ENCODE measurements at regions of chr16 and their contacts with region 1.

Region 1: DNA sequence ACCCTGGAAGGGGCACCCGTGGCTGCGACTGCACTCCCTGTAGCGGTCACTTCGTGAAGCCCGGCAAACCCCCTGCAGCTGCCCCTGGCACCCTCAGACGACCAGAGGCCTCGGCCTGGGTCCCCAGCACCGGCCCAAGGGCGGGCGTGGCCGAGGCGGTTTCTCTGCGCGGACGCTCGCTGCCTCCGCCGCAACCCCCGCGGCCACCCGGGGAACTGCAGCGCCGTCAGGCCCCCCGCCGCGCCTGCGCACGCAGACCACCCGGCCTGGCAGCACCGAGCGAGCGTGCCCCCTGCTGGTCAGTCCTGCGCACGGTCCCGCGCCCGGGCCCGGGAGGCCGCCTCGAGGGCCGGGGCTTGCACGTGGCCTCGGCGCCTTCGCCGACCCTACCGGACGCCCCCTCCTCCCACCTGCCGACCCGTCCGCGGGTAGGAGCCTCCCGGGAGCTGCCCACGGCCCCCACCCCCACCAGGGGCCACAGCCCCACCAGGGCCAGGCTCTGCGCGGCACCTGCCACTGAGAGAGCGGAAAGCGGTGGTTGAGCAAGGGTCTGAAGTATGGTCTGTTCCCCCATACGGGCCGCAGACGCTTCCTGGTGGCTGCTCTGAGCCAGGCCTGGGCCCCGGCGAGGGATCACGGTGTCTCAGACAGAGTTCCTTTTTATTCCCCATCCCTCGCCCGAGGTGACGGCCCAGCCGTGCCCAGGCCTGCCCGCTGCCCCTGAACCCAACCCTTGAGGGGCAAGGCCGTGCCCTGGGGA is 11.5 kb upstream of the HS3ST6 start:
- DNase-seq: peak; percentile 70
- H3K4me3 Mint-ChIP-seq: peak overlapping the region; percentile 31
- H3K27ac Mint-ChIP-seq: no peak overlapping the region
- H3K4me1 Mint-ChIP-seq: no peaks in the 10 kb centered on the region
- H3K27me3 Mint-ChIP-seq: no peaks in the 10 kb centered on the region
- CTCF ChIP-seq: peak; percentile 98

Region 2: GRCh38 chr16:1863681-1864460 is 65.9 kb before region 1 on chr16:
- CTCF ChIA-PET with region 1: interaction called, 105 read pairs
- POLR2A ChIA-PET with region 1: interaction called, 4 read pairs
- intact Hi-C with region 1: loop called (anchors 2 kb)
- DNase-seq: peak; percentile 42
- H3K4me3 Mint-ChIP-seq: no peak overlapping the region
- H3K27ac Mint-ChIP-seq: no peak overlapping the region
- H3K4me1 Mint-ChIP-seq: no peaks in the 10 kb centered on the region
- H3K27me3 Mint-ChIP-seq: peaks cover 21% of the 10 kb centered on the region
- CTCF ChIP-seq: peak; percentile 67

Region 3: GRCh38 chr16:2033057-2033908 is 103.5 kb after region 1 on chr16:
- CTCF ChIA-PET with region 1: no interaction called
- POLR2A ChIA-PET with region 1: no interaction called
- intact Hi-C with region 1: no loop called
- DNase-seq: no peak
- H3K4me3 Mint-ChIP-seq: no peak overlapping the region
- H3K27ac Mint-ChIP-seq: no peak overlapping the region
- H3K4me1 Mint-ChIP-seq: no peaks in the 10 kb centered on the region
- H3K27me3 Mint-ChIP-seq: no peaks in the 10 kb centered on the region
- CTCF ChIP-seq: no peak